Transverse colon (tissue), 4 donors: ENCODE measurements at regions of chr13 and their contacts with region 1.

Region 1: GRCh38 chr13:80436571-80437169 is 95.7 kb upstream of the SPRY2 start:
- DNase-seq: no peak
- H3K4me3 ChIP-seq: no peak overlapping the region
- H3K27ac ChIP-seq: peak overlapping the region; percentile 33 to 65 (median 45)
- H3K4me1 ChIP-seq: peaks cover 0 to 6% (median 0%) of the 10 kb centered on the region in 4 donors
- H3K27me3 ChIP-seq: no peaks in the 10 kb centered on the region
- CTCF ChIP-seq: no peak
- EP300 ChIP-seq: no peak
- POLR2A ChIP-seq: no peak

Region 2: GRCh38 chr13:80141123-80141849 is 295.4 kb before region 1 on chr13:
- in situ Hi-C with region 1: no loop called
- intact Hi-C with region 1: loop called (anchors 5 kb)
- DNase-seq: no peak
- H3K4me3 ChIP-seq: no peak overlapping the region
- H3K27ac ChIP-seq: peak overlapping the region in 1 of 4 donors; percentile 35
- H3K4me1 ChIP-seq: peaks cover 0 to 13% (median 10%) of the 10 kb centered on the region in 4 donors
- H3K27me3 ChIP-seq: no peaks in the 10 kb centered on the region
- CTCF ChIP-seq: no peak
- EP300 ChIP-seq: no peak
- POLR2A ChIP-seq: no peak